Panc1 (cell line): ENCODE measurements at regions of chr13 and their contacts with region 1.

Region 1: GRCh38 chr13:49655906-49656305 is 27.6 kb downstream of the ARL11 start:
- DNase-seq: no peak
- ATAC-seq: no peak
- H3K4me3 ChIP-seq: no peak overlapping the region
- H3K27ac ChIP-seq: no peak overlapping the region
- H3K4me1 ChIP-seq: no peaks in the 10 kb centered on the region
- H3K27me3 ChIP-seq: no peaks in the 10 kb centered on the region
- CTCF ChIP-seq: no peak

Region 2: DNA sequence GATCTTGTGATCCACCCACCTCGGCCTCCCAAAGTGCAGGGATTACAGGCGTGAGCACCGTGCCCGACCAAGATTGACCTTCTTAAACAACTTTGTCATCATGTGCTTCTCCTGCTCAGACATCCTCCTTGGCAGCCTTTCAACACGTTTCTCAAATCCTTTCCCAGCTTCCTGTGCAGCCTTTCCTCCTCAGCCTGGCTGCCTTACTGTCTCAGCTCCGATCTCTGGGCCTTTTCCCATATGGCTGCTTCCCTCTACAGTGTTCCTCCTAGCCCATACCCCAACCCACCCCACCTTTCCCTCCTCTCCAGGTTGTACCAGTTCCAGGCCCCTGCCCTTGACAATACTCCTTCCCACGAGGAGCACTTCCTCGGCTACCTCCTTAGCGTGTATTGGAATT is 153.0 kb before region 1 on chr13:
- CTCF ChIA-PET with region 1: no interaction called
- POLR2A ChIA-PET with region 1: interaction called, 12 read pairs
- in situ Hi-C with region 1: no loop called
- intact Hi-C with region 1: no loop called
- DNase-seq: no peak
- ATAC-seq: no peak
- H3K4me3 ChIP-seq: no peak overlapping the region
- H3K27ac ChIP-seq: no peak overlapping the region
- H3K4me1 ChIP-seq: no peaks in the 10 kb centered on the region
- H3K27me3 ChIP-seq: no peaks in the 10 kb centered on the region
- CTCF ChIP-seq: no peak

Region 3: DNA sequence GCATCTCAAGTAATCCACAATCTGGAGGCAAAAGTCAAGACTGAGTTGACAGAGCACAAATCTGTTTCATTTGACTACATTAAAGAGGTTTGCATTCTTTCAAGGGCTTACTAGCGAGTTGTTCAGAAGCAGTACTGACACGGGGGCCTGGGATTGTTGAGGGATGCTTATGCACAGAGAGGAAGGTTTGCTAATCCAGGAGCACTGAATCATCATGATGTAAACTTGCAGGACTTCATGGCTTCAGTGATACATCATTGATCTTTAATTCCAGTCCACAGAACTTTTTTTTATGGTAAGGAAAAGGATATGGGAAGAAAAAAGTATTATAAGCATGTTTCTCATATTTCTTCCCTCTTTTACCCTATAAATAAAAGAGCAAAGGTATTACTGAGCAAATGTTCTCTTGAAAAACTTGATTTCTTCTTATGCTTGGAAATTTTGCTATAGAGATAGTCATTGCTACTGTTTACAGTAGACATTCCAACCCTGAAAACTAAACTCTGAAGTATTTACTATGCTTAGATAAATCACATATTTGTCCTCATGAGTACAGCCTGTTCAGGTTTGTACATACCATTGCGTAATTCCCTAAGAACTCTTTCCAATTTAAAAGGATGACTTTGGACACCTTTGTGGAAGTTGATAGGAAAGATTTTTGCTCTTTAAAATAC is 202.4 kb after region 1 on chr13:
- CTCF ChIA-PET with region 1: no interaction called
- POLR2A ChIA-PET with region 1: no interaction called
- in situ Hi-C with region 1: no loop called
- intact Hi-C with region 1: loop called (anchors 5 kb)
- DNase-seq: peak; percentile 42
- ATAC-seq: peak; percentile 91
- H3K4me3 ChIP-seq: no peak overlapping the region
- H3K27ac ChIP-seq: 0 out of 2 replicates have a peak overlapping the region, but pooled peaks have one; percentile 44
- H3K4me1 ChIP-seq: peaks cover 6% of the 10 kb centered on the region
- H3K27me3 ChIP-seq: no peaks in the 10 kb centered on the region
- CTCF ChIP-seq: no peak